Endothelial cell of umbilical vein (primary cell): ENCODE measurements at regions of chr16 and their contacts with region 1.

Region 1: DNA sequence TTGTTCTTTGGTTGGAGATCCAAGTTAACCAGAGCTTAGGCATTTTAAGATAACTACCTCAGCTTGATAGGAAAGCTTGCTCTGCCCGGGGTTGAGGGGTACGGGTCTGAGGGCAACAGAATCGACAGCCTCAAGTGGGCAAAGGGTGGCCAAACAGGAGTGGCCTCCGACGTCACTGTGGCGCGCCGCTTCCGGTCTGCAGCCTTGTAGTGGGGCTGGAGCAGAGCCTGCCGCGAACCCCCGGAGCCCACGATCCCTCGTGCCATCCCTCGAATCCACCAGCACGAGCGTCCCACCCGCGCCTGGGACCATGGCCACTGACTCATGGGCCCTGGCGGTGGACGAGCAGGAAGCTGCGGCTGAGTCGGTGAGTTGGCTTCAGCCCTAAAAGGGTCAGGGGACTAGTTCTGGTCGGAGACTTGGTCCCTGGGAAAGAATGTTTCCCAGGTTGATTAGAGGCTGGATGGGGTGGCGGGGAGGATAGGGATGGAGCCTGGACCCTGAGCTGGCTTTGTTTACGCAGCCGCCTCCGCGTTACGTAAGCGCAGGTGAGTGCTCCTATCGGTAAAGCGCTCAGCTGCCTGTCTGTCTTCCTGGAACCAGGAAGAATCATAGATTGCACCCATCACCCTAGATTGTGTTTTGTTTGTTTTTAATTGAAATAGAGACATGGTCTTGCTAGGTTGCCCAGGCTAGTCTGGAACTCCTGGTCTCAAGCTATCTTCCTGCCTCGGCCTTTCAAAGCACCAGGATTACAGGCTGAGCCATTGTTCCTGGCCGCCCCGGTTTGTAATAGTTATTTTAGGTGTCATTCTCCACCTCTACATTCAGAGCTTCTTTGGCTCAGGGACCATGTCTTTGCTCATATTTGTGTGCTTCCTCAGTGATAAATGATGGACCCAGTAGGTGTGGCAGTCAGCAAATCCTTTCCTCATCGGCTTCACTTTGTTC is at the start of gene DDX19B:
- DNase-seq: peak; percentile 74
- H3K4me3 ChIP-seq: peak within 1 kb of the TSS; percentile 45 to 94 (median 77)
- H3K27ac ChIP-seq: peak within 1 kb of the TSS; percentile 61
- H3K4me1 ChIP-seq: peaks cover 3% of the 10 kb centered on the region
- H3K27me3 ChIP-seq: no peaks in the 10 kb centered on the region
- CTCF ChIP-seq: no peak
- POLR2A ChIP-seq: peak; percentile 80
- total RNA-seq, gene DDX19B: 33.6 and 34.3 TPM in 2 replicates

Region 2: GRCh38 chr16:70345840-70346239 is 46.6 kb after region 1 on chr16:
- CTCF ChIA-PET with region 1: no interaction called
- POLR2A ChIA-PET with region 1: interaction called, 4 read pairs
- dilution Hi-C with region 1: no loop called
- intact Hi-C with region 1: loop called (anchors 1 kb)
- DNase-seq: no peak
- H3K4me3 ChIP-seq: peak overlapping the region; percentile 25 to 95 (median 88)
- H3K27ac ChIP-seq: peak overlapping the region; percentile 70
- H3K4me1 ChIP-seq: peaks cover 11% of the 10 kb centered on the region
- H3K27me3 ChIP-seq: no peaks in the 10 kb centered on the region
- CTCF ChIP-seq: no peak
- POLR2A ChIP-seq: no peak